ENCODE measurements at regions of chr11 and their contacts with region 1.

Region 1: GRCh38 chr11:118247047-118247446 is 5.1 kb downstream of the MPZL3 start:
- DNase-seq: no peak
- H3K4me3 Mint-ChIP-seq: no peak overlapping the region
- H3K27ac Mint-ChIP-seq: no peak overlapping the region
- H3K4me1 Mint-ChIP-seq: peaks cover 60% of the 10 kb centered on the region
- H3K27me3 Mint-ChIP-seq: no peaks in the 10 kb centered on the region

Region 2: DNA sequence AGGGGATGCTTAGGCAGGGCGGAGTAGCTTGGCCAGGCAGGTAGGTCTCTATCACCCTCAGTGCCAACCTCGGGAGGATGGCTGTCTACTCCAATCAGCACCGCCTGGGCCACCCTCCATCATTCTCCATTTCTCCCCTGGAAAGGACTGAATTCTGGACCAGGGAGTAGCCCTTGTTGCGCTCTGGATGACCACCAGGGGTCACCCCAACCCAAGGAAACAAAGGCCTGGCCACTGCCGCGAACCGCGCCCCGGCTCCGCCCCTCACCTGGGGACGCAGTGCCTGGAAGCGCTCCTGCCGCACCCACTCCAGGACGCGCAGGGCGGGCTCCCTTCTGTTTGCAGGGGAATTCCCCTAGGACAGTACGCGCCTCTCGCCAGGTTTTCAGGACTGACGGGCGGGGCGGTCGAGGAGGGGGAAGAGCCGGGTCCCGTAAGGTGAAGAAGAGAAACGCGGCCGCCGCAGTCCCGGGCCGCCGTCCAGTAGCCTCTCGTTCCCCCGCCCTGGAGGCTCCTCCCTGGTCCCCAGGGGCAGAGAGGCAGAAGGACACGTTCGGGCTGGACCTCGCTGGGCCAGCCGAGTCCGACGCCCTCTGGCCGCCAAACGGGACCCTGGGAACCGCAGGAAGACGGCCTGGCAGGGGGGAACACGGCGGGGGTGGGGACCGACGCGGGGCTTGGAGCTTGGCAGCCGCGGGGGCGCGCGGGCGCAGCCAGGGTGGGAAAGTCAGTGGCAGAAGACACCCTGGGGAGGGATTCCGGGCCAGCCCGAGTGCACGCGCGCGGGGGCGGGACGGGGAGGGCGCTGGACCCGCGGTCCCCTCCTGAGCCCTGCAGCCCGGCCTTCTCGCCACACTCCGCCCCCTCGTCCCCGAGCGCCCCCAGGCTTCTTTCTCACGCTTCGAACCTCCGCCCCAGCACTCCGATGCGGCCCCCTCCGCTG is 101.5 kb before region 1 on chr11:
- CTCF ChIA-PET with region 1: no interaction called
- DNase-seq: peak; percentile 93
- H3K4me3 Mint-ChIP-seq: peak overlapping the region; percentile 75
- H3K27ac Mint-ChIP-seq: no peak overlapping the region
- H3K4me1 Mint-ChIP-seq: peaks cover 4% of the 10 kb centered on the region
- H3K27me3 Mint-ChIP-seq: peaks cover 96% of the 10 kb centered on the region

Region 3: GRCh38 chr11:118216621-118217481 is 30.2 kb before region 1 on chr11:
- CTCF ChIA-PET with region 1: interaction called, 10 read pairs
- DNase-seq: peak; percentile 50
- H3K4me3 Mint-ChIP-seq: peak overlapping the region; percentile 68
- H3K27ac Mint-ChIP-seq: peak overlapping the region; percentile 94
- H3K4me1 Mint-ChIP-seq: peaks cover 99% of the 10 kb centered on the region
- H3K27me3 Mint-ChIP-seq: no peaks in the 10 kb centered on the region